Activated CD8-positive, alpha-beta memory T cell treated with anti-CD3 and anti-CD28 coated beads, Interleukin-2, amount 10 ng/mL, durations not matched to agents 7 days and 5 days (primary cell): ENCODE measurements at regions of chr7 and their contacts with region 1.

Region 1: GRCh38 chr7:30276203-30276900 is 8.0 kb upstream of the ZNRF2 start:
- DNase-seq: peak; percentile 73
- ATAC-seq: peak; percentile 82
- H3K4me3 Mint-ChIP-seq: no peak overlapping the region
- H3K27ac Mint-ChIP-seq: no peak overlapping the region
- H3K4me1 Mint-ChIP-seq: peaks cover 12% of the 10 kb centered on the region
- H3K27me3 Mint-ChIP-seq: no peaks in the 10 kb centered on the region

Region 2: DNA sequence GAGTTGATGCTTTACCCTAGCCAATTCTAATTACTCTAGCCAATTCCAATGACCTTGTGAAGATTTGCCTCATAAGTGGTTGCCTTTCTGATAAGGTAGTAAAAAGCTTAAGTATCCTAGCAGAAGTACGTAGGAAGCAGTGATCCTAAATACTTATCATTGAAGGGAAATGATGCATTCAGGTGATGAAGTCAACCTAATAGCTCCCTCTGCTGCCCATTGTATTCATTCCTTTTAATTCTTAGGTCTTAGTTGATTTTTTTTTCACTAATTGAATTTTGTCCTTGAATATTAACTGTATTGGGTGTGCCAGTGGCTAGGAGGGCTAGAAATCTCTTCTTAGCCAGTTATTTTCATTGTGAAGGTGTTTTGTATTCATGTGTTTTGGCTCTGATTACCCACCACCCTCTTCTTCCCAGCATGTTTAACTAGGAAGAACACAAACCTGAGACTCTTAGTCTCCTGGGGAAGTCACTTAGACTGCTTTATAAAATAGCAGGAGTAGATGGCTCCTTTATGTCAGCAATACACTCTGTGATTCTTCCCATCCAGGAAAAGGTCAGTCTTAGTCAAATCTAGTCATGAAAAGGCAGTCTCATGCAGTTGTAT is 201.8 kb before region 1 on chr7:
- CTCF ChIA-PET with region 1: no interaction called
- DNase-seq: no peak
- ATAC-seq: no peak
- H3K4me3 Mint-ChIP-seq: no peak overlapping the region
- H3K27ac Mint-ChIP-seq: no peak overlapping the region
- H3K4me1 Mint-ChIP-seq: no peaks in the 10 kb centered on the region
- H3K27me3 Mint-ChIP-seq: no peaks in the 10 kb centered on the region

Region 3: GRCh38 chr7:30412810-30413504 is 136.6 kb after region 1 on chr7:
- CTCF ChIA-PET with region 1: interaction called, 13 read pairs
- DNase-seq: no peak
- ATAC-seq: peak; percentile 58
- H3K4me3 Mint-ChIP-seq: no peak overlapping the region
- H3K27ac Mint-ChIP-seq: no peak overlapping the region
- H3K4me1 Mint-ChIP-seq: no peaks in the 10 kb centered on the region
- H3K27me3 Mint-ChIP-seq: no peaks in the 10 kb centered on the region

Region 4: DNA sequence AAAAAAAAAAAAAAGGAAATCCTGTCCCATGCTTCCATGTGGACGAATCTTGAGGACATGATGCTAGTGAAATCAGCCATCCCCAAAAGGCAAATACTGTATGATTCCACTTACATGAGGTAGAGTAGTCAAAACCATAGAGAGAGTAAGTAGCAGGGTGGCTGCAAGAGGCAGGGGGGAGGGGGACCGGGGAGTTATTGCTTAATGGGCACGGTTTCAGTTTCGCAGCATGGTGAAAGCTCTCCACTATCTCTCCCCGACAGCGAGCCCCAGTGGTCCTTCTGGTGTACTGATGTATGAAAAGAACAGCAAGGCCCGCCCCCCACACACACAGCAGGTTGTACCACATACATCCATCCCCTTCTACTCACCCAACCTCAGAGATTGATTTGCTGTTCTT is 169.4 kb after region 1 on chr7:
- CTCF ChIA-PET with region 1: interaction called, 13 read pairs
- DNase-seq: peak; percentile 86
- ATAC-seq: peak; percentile 97
- H3K4me3 Mint-ChIP-seq: no peak overlapping the region
- H3K27ac Mint-ChIP-seq: peak overlapping the region; percentile 22
- H3K4me1 Mint-ChIP-seq: peaks cover 4% of the 10 kb centered on the region
- H3K27me3 Mint-ChIP-seq: no peaks in the 10 kb centered on the region